Ascending aorta (tissue), 2 donors: ENCODE measurements at regions of chr17 and their contacts with region 1.

Region 1: GRCh38 chr17:49315551-49316257 is 46.3 kb downstream of the ZNF652 start:
- DNase-seq: peak; percentile 37 to 89
- H3K4me3 ChIP-seq: peak overlapping the region in 1 of 2 donors; percentile 36
- H3K27ac ChIP-seq: peak overlapping the region; percentile 24 to 37
- H3K4me1 ChIP-seq: peaks cover 7 to 8% of the 10 kb centered on the region in 2 donors
- H3K27me3 ChIP-seq: no peaks in the 10 kb centered on the region
- CTCF ChIP-seq: peak; percentile 61 to 82 (median 76)

Region 2: GRCh38 chr17:49361902-49362722 is 46.4 kb after region 1 on chr17 and contains the start of gene ZNF652:
- intact Hi-C with region 1: loop called (anchors 2 kb)
- DNase-seq: peak; percentile 69 to 92
- H3K4me3 ChIP-seq: peak within 1 kb of the TSS; percentile 77 to 100
- H3K27ac ChIP-seq: peak within 1 kb of the TSS; percentile 86 to 98
- H3K4me1 ChIP-seq: peaks cover 3% of the 10 kb centered on the region in 2 donors
- H3K27me3 ChIP-seq: no peaks in the 10 kb centered on the region
- CTCF ChIP-seq: no peak
- total RNA-seq, gene ZNF652: 13.5 TPM

Region 3: GRCh38 chr17:49390548-49391324 is 75.0 kb after region 1 on chr17:
- intact Hi-C with region 1: loop called (anchors 1 kb)
- DNase-seq: no peak
- H3K4me3 ChIP-seq: no peak overlapping the region
- H3K27ac ChIP-seq: peak overlapping the region in 1 of 2 donors; percentile 12
- H3K4me1 ChIP-seq: peaks cover 0 to 4% of the 10 kb centered on the region in 2 donors
- H3K27me3 ChIP-seq: no peaks in the 10 kb centered on the region
- CTCF ChIP-seq: no peak

Region 4: DNA sequence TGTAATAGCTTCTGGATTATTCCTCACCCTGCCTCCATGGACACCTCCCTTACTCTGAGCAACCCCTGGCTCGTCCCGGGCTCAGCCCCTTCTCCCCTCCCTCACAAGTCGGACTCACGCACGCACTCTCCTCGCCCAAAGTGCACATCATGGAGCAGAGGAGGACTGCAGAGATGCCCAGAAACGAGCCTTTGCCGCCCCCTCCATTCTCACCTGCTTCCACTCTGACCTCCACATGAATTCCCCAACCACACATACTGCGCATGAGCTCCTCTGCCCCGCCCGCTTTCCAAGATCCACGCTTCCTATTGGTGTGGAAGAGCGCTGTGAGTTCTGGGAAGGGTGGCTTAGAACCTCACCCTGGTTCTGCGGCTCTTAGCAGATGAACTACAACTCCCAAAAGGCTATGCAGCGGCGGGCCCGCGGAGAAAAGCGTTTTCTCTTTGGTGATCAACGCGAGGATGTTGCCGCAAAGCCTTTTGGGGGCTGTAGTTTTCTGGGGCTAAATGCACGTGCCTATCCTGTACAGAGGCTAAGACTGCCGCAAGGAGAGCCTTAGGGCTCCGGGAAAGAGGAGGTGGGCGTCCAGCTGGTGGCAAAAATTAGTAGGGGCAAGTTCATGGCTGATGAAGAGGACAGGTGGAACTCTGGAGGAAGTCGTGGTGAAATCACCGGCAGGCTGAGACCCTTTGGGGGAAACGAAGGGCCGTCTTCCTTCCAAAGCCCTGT is 99.1 kb after region 1 on chr17 and contains the start of gene PHB1:
- intact Hi-C with region 1: loop called (anchors 5 kb)
- DNase-seq: peak; percentile 89 to 98
- H3K4me3 ChIP-seq: peak within 1 kb of the TSS; percentile 75 to 97
- H3K27ac ChIP-seq: no peak within 1 kb of the TSS
- H3K4me1 ChIP-seq: peaks cover 6 to 8% of the 10 kb centered on the region in 2 donors
- H3K27me3 ChIP-seq: no peaks in the 10 kb centered on the region
- CTCF ChIP-seq: no peak
- total RNA-seq, gene PHB1: 79.6 TPM

Region 5: DNA sequence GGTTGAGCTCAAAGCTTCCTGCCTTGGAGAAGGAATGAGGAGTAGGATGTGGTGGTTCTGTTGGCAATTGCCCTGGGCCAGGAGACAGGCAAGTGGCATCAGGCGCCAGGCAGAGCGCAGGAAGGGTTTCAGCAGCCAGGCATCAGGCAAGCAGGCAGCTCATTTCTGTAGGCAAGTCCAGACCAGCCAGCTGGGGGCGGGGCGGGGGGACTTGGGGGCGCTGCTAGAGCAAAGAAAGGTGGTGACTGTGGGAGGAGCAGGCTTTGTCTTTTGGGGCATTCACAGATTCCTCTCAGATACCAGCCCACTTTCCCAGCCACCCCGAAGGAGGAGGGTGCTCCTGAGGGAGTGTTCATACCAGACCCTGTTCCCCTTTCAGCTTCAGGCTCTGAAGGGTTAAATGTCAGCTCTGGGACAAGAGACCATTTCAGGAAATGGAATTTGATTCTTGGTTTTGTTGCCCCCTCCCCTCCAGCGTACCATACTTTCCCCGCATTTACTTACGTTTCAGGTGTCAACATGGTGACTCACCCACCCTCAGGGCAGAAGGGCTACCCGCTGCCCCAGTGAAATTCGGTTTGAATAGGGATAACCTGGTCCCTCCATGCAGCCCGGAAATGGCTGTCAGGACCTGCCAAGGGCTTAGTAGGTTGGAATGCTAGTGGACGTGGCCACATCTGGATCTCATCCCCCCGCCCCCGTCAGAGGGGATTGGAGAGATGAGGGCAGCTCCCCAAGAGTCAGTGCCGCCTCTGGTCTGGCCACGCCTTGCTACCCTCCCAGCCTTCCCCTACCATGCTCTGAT is 192.6 kb after region 1 on chr17:
- intact Hi-C with region 1: no loop called
- DNase-seq: no peak
- H3K4me3 ChIP-seq: no peak overlapping the region
- H3K27ac ChIP-seq: no peak overlapping the region
- H3K4me1 ChIP-seq: no peaks in the 10 kb centered on the region
- H3K27me3 ChIP-seq: no peaks in the 10 kb centered on the region
- CTCF ChIP-seq: no peak

Region 6: GRCh38 chr17:49556223-49556971 is 240.7 kb after region 1 on chr17:
- intact Hi-C with region 1: loop called (anchors 2 kb)
- DNase-seq: peak in 1 of 2 donors; percentile 90
- H3K4me3 ChIP-seq: peak overlapping the region in 1 of 2 donors; percentile 11
- H3K27ac ChIP-seq: no peak overlapping the region
- H3K4me1 ChIP-seq: peaks cover 0 to 2% of the 10 kb centered on the region in 2 donors
- H3K27me3 ChIP-seq: no peaks in the 10 kb centered on the region
- CTCF ChIP-seq: peak; percentile 95 to 97 (median 95)